H1 (cell line): ENCODE measurements at regions of chr1 and their contacts with region 1.

Region 1: GRCh38 chr1:177922209-177922608 is 47.6 kb downstream of the SEC16B start:
- DNase-seq: no peak
- H3K4me3 ChIP-seq: no peak overlapping the region
- H3K27ac ChIP-seq: no peak overlapping the region
- H3K4me1 ChIP-seq: peaks cover 0 to 6% (median 0%) of the 10 kb centered on the region in 4 experiments; a peak in 1 of 7 replicates
- H3K27me3 ChIP-seq: no peaks in the 10 kb centered on the region
- CTCF ChIP-seq: peak in 1 of 3 experiments; percentile 42; a peak in 2 of 4 replicates
- EP300 ChIP-seq: no peak
- POLR2A ChIP-seq: no peak
- RAD21 ChIP-seq: peak in 1 of 2 experiments; percentile 24; a peak in 2 of 4 replicates

Region 2: GRCh38 chr1:177838892-177839291 is 83.3 kb before region 1 on chr1:
- CTCF ChIA-PET with region 1: no interaction called
- POLR2A ChIA-PET with region 1: no interaction called
- DNase-seq: no peak
- H3K4me3 ChIP-seq: no peak overlapping the region
- H3K27ac ChIP-seq: no peak overlapping the region
- H3K4me1 ChIP-seq: no peaks in the 10 kb centered on the region; a peak in 2 of 7 replicates
- H3K27me3 ChIP-seq: no peaks in the 10 kb centered on the region
- CTCF ChIP-seq: no peak
- EP300 ChIP-seq: no peak
- POLR2A ChIP-seq: no peak
- RAD21 ChIP-seq: no peak

Region 3: DNA sequence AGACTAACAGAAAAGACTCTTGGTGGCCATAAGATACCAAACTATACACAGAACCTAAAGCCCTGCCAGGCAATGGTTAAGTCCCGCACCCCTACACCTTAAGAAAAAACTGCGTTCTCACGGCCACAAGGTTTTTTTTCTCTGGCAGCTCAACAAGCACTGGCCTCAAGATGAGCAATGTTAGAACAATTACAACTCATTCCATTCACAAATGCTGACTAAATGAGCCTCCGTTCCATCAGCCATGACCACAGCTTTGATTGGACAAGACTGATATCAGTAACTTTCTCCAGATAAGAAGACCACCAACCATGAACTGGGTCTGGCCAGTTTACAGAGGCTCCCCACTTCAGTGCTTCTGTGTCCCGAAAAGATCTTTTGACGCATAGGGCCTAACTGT is 15.7 kb after region 1 on chr1:
- CTCF ChIA-PET with region 1: interaction called, 274 read pairs
- POLR2A ChIA-PET with region 1: no interaction called
- DNase-seq: no peak
- H3K4me3 ChIP-seq: no peak overlapping the region
- H3K27ac ChIP-seq: no peak overlapping the region
- H3K4me1 ChIP-seq: peaks cover 0 to 2% (median under 1%) of the 10 kb centered on the region in 4 experiments; a peak in 1 of 7 replicates
- H3K27me3 ChIP-seq: no peaks in the 10 kb centered on the region
- CTCF ChIP-seq: no peak
- EP300 ChIP-seq: no peak
- POLR2A ChIP-seq: no peak
- RAD21 ChIP-seq: no peak